GM12878 (cell line): ENCODE measurements at regions of chr4 and their contacts with region 1.

Region 1: GRCh38 chr4:127965062-127965802 is at the starts of genes ABHD18 and MFSD8:
- DNase-seq: peak; percentile 99
- ATAC-seq: peak; percentile 96
- H3K4me3 ChIP-seq: peak within 1 kb of the TSS; percentile 83
- H3K27ac ChIP-seq: peak within 1 kb of the TSS; percentile 89
- H3K4me1 ChIP-seq: peaks cover 5% of the 10 kb centered on the region; the same call in 1 of the 2 replicates
- H3K27me3 ChIP-seq: no peaks in the 10 kb centered on the region
- CTCF ChIP-seq: peak; percentile 38 to 40 (median 39); a peak in 4 of 6 replicates
- EP300 ChIP-seq: 0 out of 4 replicates have a peak, but pooled peaks of 1 of the 2 experiments have one; percentile 9
- POLR2A ChIP-seq: peak; percentile 88
- RAD21 ChIP-seq: 0 out of 2 replicates have a peak, but pooled peaks have one; percentile 15
- polyA plus RNA-seq, gene ABHD18: 3.4 to 3.5 TPM
- polyA plus RNA-seq, gene MFSD8: 18.2 to 29.9 TPM

Region 2: GRCh38 chr4:127975121-127975770 is 10.0 kb after region 1 on chr4:
- CTCF ChIA-PET with region 1: interaction called, 4 read pairs
- POLR2A ChIA-PET with region 1: interaction called, 9 read pairs
- RAD21 ChIA-PET with region 1: no interaction called
- SMC1A ChIA-PET with region 1: interaction called, 12 read pairs
- in situ Hi-C with region 1: no loop called
- intact Hi-C with region 1: no loop called
- DNase-seq: no peak
- ATAC-seq: no peak
- H3K4me3 ChIP-seq: no peak overlapping the region
- H3K27ac ChIP-seq: no peak overlapping the region
- H3K4me1 ChIP-seq: no peaks in the 10 kb centered on the region
- H3K27me3 ChIP-seq: no peaks in the 10 kb centered on the region
- CTCF ChIP-seq: no peak
- EP300 ChIP-seq: no peak
- POLR2A ChIP-seq: no peak
- RAD21 ChIP-seq: no peak

Region 3: GRCh38 chr4:127997534-127998388 is 32.5 kb after region 1 on chr4:
- CTCF ChIA-PET with region 1: interaction called, 13 read pairs
- POLR2A ChIA-PET with region 1: interaction called, 5 read pairs
- RAD21 ChIA-PET with region 1: interaction called, 11 read pairs
- SMC1A ChIA-PET with region 1: interaction called, 6 read pairs
- in situ Hi-C with region 1: no loop called
- intact Hi-C with region 1: no loop called
- DNase-seq: peak; percentile 44
- ATAC-seq: peak; percentile 99
- H3K4me3 ChIP-seq: no peak overlapping the region
- H3K27ac ChIP-seq: peak overlapping the region; percentile 11; the same call in 1 of the 2 replicates
- H3K4me1 ChIP-seq: no peaks in the 10 kb centered on the region
- H3K27me3 ChIP-seq: no peaks in the 10 kb centered on the region
- CTCF ChIP-seq: peak; percentile 51 to 63 (median 53); a peak in 5 of 6 replicates
- EP300 ChIP-seq: no peak; a peak in 1 of 4 replicates
- POLR2A ChIP-seq: no peak
- RAD21 ChIP-seq: peak; percentile 50

Region 4: DNA sequence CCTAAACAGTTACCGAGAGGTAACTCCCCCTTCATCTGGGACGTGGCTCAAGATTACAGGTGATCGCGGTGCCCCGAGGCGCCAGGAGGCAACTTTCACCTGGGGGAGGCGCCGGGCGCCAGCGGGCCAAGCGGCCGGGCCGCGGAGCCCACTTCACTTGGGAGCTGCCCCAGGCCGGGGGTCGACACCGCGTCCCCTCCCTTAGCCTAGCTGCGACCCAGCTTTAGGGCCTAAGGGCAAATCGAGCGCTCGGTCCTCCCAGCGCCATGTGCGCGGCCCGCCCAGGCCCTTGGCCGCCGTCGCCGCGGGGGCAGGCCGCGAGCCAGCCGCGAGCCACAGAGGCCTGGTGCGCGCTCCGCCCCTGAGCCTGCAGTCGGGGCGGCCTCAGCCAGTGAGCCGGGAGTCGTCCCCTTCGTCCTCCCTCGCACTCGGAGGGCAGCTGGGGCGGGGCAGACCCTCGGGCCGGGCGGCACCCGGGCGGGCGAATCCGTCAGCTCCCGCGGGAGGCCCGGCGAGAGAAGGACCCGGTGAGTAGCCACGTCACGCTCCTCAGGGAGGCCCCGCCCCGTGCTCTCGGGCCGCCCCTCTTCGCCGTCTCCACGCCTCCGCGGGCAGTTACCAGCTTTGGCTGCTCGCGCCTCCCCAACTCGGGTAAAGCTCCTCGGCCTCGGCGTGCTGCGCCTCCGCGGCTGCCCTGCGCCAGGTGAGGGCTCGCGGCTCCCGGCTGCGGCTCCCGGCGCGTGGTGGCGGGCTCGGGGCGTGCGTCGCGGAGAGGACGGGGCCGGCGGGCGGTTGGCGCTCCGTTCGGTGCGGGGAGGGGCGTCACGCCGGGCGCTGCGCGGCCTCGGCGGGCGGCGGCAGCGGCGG is 95.7 kb after region 1 on chr4 and contains the start of gene LARP1B:
- CTCF ChIA-PET with region 1: interaction called, 6 read pairs
- POLR2A ChIA-PET with region 1: interaction called, 25 read pairs
- RAD21 ChIA-PET with region 1: interaction called, 4 read pairs
- SMC1A ChIA-PET with region 1: interaction called, 3 read pairs
- in situ Hi-C with region 1: no loop called
- intact Hi-C with region 1: loop called (anchors 2 kb)
- DNase-seq: peak; percentile 74
- ATAC-seq: peak; percentile 91
- H3K4me3 ChIP-seq: peak within 1 kb of the TSS; percentile 92
- H3K27ac ChIP-seq: peak within 1 kb of the TSS; percentile 88
- H3K4me1 ChIP-seq: no peaks in the 10 kb centered on the region
- H3K27me3 ChIP-seq: no peaks in the 10 kb centered on the region
- CTCF ChIP-seq: no peak
- EP300 ChIP-seq: no peak
- POLR2A ChIP-seq: peak; percentile 93
- RAD21 ChIP-seq: no peak
- polyA plus RNA-seq, gene LARP1B: 9.3 to 12.7 TPM

Region 5: DNA sequence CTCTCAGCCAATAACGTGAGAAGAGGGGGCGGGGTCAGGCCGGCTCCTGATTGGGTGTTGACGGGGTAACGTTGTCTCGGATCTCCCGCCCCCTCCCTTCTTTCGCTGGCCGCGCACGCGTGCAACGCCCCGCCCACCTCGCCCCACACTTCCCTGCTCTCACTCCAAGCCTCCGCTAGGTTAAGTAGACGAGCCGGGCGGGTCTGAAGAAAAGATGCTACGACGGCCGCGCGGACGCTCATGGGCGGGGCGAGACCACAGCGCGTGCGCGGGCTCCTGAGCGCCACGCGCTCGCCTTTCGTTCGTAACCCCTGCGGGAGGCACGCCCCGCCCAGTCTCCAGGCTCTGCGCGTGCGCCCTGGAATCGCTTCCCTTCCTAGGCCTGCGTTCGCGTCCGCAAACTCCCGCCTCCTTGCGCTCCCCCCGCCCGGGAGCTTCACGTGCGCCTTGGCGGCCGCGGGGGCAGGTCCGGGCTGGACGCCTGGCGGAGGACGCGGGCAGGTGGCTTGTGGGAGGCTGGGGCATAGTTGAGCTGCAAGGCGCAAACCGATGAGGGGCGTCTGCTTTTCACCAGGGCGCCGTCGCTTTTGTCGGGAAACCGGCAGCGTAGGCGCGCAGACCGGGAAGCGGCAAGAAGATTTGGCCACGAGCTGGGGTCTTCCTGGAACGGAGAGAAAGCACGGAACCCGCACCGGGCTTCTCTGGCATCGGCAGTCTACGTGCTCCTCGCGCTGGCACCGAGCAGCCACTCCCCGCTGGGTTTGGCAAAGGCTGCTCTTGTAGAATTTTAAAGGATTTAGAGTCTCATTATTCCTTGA is 322.8 kb after region 1 on chr4:
- CTCF ChIA-PET with region 1: interaction called, 3 read pairs
- POLR2A ChIA-PET with region 1: no interaction called
- RAD21 ChIA-PET with region 1: interaction called, 3 read pairs
- SMC1A ChIA-PET with region 1: no interaction called
- in situ Hi-C with region 1: no loop called
- intact Hi-C with region 1: loop called (anchors 10 kb)
- DNase-seq: peak; percentile 97
- ATAC-seq: peak; percentile 86
- H3K4me3 ChIP-seq: peak overlapping the region; percentile 81
- H3K27ac ChIP-seq: peak overlapping the region; percentile 87
- H3K4me1 ChIP-seq: no peaks in the 10 kb centered on the region
- H3K27me3 ChIP-seq: no peaks in the 10 kb centered on the region
- CTCF ChIP-seq: peak in 1 of 3 experiments; percentile 2; a peak in 1 of 6 replicates
- EP300 ChIP-seq: 0 out of 4 replicates have a peak, but pooled peaks of 1 of the 2 experiments have one; percentile 52
- POLR2A ChIP-seq: peak; percentile 93
- RAD21 ChIP-seq: no peak